Panc1 (cell line): ENCODE measurements at regions of chr11 and their contacts with region 1.

Region 1: DNA sequence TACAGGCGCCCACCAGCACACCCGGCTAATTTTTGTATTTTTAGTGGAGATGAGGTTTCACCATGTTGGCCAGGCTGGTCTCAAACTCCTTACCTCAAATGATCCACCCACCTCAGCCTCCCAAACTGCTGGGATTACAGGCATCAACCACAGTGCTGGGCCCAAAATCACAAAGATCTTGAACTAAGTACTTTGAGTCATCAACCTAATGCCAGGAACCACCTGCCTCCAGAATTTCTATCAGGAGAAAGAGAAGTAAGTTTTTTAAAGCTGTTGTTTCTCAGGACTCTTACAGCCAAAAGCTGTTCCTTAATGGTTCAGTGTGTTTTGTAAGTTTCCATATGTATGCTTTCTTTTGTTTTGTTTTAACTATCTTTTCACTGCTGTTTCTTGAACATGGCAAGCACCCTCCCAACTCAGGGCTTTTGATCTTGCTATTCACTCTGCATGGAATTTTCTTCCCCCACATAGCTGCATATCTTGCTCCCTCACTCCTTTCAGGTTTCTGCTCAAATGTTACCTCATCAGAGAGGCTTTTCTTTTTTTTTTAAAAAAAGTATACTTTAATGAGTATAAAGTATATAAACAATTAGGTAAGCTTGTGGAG is 6.0 kb upstream of the PAK1 start:
- DNase-seq: no peak
- ATAC-seq: no peak
- H3K4me3 ChIP-seq: no peak overlapping the region
- H3K27ac ChIP-seq: no peak overlapping the region
- H3K4me1 ChIP-seq: no peaks in the 10 kb centered on the region
- H3K27me3 ChIP-seq: peaks cover 4% of the 10 kb centered on the region; the same call in 1 of the 2 replicates
- CTCF ChIP-seq: no peak

Region 2: DNA sequence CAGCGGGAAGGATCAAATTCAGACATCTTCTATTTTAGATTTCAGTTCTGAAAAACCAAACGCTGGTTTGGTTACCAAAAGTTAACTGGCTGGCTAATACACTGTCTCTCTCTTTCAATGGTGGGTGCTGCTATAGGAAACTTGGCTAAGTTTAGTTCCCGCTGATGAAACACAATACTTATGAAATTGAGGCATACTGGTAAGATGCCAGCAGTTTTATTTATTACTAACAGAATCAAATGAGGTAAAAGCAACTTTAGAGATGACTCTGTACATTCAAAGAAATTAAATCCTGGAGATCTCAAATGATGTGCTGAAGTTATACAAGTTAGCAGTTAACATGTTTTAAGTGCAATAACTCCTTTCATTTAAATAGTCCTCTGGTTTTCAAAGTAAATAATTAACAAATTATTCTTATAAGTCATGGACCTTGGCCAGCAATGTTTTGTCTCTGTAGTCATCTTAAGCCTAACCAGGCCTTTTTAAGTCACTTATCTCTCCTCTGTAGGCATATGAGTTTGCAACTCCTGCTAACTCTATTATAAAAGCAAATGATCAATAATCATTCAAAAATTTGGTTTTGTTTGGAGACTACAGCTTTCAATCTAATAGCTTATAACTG is 60.8 kb before region 1 on chr11:
- CTCF ChIA-PET with region 1: no interaction called
- POLR2A ChIA-PET with region 1: no interaction called
- in situ Hi-C with region 1: no loop called
- intact Hi-C with region 1: no loop called
- DNase-seq: no peak
- ATAC-seq: no peak
- H3K4me3 ChIP-seq: no peak overlapping the region
- H3K27ac ChIP-seq: no peak overlapping the region
- H3K4me1 ChIP-seq: no peaks in the 10 kb centered on the region
- H3K27me3 ChIP-seq: no peaks in the 10 kb centered on the region
- CTCF ChIP-seq: no peak

Region 3: DNA sequence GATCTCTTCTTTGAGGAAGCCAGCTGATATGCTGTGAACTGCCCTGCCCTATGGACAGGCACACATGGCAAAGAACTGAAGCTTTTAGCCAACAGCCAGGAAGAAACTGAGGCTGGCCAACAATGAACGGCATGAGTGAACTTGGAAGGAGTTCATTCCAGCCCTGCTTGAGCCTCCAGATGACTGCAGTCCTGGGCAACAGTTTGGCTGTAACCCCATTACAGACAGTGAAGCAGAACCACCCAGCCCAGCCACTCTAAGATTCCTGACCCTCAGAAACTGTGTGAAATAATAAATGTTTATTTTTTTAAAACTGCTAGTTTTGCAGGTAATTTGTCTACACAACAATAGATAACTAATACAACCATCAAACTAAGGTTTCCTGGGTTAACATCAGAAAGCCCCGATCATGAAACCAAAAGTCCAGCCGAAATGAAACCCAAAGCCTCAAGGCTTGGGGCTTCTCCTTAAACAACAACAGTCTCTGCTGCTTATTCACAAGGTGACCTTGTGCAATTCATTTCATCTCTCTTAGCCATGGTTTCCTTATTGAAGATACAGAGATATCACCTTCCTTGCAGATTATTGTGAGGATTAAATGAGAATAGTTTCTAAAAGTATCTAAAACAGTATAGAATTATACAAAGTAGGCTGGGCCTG is 37.3 kb before region 1 on chr11:
- CTCF ChIA-PET with region 1: no interaction called
- POLR2A ChIA-PET with region 1: no interaction called
- in situ Hi-C with region 1: no loop called
- intact Hi-C with region 1: no loop called
- DNase-seq: no peak
- ATAC-seq: no peak
- H3K4me3 ChIP-seq: no peak overlapping the region
- H3K27ac ChIP-seq: no peak overlapping the region
- H3K4me1 ChIP-seq: no peaks in the 10 kb centered on the region
- H3K27me3 ChIP-seq: peaks cover 9% of the 10 kb centered on the region; the same call in 1 of the 2 replicates
- CTCF ChIP-seq: no peak

Region 4: DNA sequence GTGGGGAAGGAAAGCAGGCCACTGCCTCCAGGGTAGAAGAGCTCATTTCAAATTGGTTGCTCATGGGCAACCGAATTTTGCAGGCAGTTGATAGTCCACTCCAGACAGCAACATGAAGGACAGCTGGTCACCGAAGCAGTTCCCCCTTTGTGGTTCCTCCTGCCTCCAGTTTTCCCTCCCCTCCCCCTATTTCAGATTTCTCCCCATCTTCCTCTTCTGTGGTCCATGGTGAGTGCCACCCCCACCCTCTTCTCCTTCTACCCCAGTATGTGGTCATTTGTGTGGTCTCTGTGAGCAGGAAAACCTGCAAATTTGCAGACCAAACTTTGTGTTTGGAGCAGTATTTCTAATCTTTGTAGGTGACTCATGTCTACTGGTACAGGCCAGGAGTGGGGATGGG is 32.2 kb after region 1 on chr11:
- CTCF ChIA-PET with region 1: no interaction called
- POLR2A ChIA-PET with region 1: no interaction called
- in situ Hi-C with region 1: no loop called
- intact Hi-C with region 1: no loop called
- DNase-seq: no peak
- ATAC-seq: no peak
- H3K4me3 ChIP-seq: no peak overlapping the region
- H3K27ac ChIP-seq: no peak overlapping the region
- H3K4me1 ChIP-seq: no peaks in the 10 kb centered on the region
- H3K27me3 ChIP-seq: peaks cover 14% of the 10 kb centered on the region
- CTCF ChIP-seq: no peak

Region 5: DNA sequence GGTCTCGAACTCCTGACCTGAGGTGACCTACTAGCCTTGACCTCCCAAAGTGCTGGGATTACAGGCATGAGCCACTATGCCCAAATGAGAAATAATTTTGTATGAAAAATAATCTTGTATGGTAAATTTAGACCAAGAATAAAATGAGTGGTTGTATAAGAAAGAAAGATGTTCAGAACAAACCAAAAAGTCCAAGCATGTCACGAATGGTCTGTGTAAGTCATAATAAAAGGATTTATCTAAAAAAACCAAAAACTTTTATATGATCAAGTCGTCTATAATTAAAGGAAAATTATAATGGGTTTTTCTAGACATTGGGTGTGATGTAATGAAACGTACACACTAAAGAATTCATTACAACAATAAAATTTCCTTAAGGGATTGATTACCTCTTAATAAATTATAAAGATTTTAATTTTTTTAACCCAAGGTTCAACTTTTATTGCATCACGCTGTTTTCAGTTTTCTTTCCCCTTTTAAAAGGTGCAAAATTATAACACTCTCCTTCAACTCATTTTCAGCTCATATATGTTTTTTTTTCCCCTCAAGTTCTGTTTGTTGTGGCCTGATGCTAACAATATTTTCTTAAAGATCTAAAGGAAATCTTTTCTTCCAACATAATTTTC is 101.0 kb after region 1 on chr11:
- CTCF ChIA-PET with region 1: interaction called, 11 read pairs
- POLR2A ChIA-PET with region 1: no interaction called
- in situ Hi-C with region 1: no loop called
- intact Hi-C with region 1: no loop called
- DNase-seq: no peak
- ATAC-seq: no peak
- H3K4me3 ChIP-seq: no peak overlapping the region
- H3K27ac ChIP-seq: no peak overlapping the region
- H3K4me1 ChIP-seq: no peaks in the 10 kb centered on the region
- H3K27me3 ChIP-seq: no peaks in the 10 kb centered on the region
- CTCF ChIP-seq: no peak